ENCODE measurements at regions of chr3 and their contacts with region 1.

Region 1: GRCh38 chr3:28279770-28280169 is 38.4 kb downstream of the CMC1 start:
- DNase-seq: no peak
- ATAC-seq: no peak
- H3K4me3 Mint-ChIP-seq: no peak overlapping the region
- H3K27ac Mint-ChIP-seq: no peak overlapping the region
- H3K4me1 Mint-ChIP-seq: peaks cover 6% of the 10 kb centered on the region; the same call in 1 of the 2 replicates
- H3K27me3 Mint-ChIP-seq: no peaks in the 10 kb centered on the region
- CTCF ChIP-seq: no peak

Region 2: GRCh38 chr3:27746838-27747237 is 532.9 kb before region 1 on chr3:
- CTCF ChIA-PET with region 1: no interaction called
- POLR2A ChIA-PET with region 1: interaction called, 11 read pairs
- DNase-seq: no peak
- ATAC-seq: no peak
- H3K4me3 Mint-ChIP-seq: no peak overlapping the region
- H3K27ac Mint-ChIP-seq: no peak overlapping the region
- H3K4me1 Mint-ChIP-seq: no peaks in the 10 kb centered on the region
- H3K27me3 Mint-ChIP-seq: no peaks in the 10 kb centered on the region; the same call in 1 of the 2 replicates
- CTCF ChIP-seq: no peak

Measured in WTC11 (cell line).